Breast epithelium (tissue), 4 donors: ENCODE measurements at regions of chr16 and their contacts with region 1.

Region 1: GRCh38 chr16:79431923-79432322 is 168.6 kb downstream of the MAF start:
- DNase-seq: no peak
- H3K4me3 ChIP-seq: no peak overlapping the region
- H3K27ac ChIP-seq: no peak overlapping the region
- H3K4me1 ChIP-seq: no peaks in the 10 kb centered on the region
- H3K27me3 ChIP-seq: no peaks in the 10 kb centered on the region
- CTCF ChIP-seq: no peak
- POLR2A ChIP-seq: no peak

Region 2: GRCh38 chr16:79480056-79480455 is 48.1 kb after region 1 on chr16:
- intact Hi-C with region 1: loop called (anchors 2 kb)
- DNase-seq: no peak
- H3K4me3 ChIP-seq: no peak overlapping the region
- H3K27ac ChIP-seq: no peak overlapping the region
- H3K4me1 ChIP-seq: no peaks in the 10 kb centered on the region
- H3K27me3 ChIP-seq: no peaks in the 10 kb centered on the region
- CTCF ChIP-seq: no peak
- POLR2A ChIP-seq: no peak